ENCODE measurements at regions of chr1 and their contacts with region 1.

Region 1: DNA sequence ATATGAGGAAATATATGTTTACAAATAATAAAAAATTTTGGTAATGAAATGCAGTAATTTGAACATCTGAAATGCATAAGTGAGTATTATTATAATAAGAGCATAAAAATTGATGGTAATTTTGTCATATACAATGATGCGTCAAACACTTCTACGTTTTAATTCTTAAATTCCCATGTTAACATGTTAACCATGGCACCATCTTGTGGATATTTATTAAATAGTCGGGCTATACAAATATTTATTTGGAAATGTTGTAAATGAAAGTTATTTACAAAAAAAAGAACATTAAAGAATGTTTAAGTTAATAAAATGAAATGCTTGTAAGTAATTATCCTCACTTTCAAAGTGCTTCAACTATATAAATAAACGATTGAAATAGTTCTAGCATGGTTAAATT is 57.2 kb upstream of the C1orf185 start:
- DNase-seq: peak; percentile 19
- H3K4me3 ChIP-seq: no peak overlapping the region
- H3K27ac ChIP-seq: no peak overlapping the region
- H3K4me1 ChIP-seq: no peaks in the 10 kb centered on the region
- H3K27me3 ChIP-seq: peaks cover 2 to 3% of the 10 kb centered on the region in 2 experiments
- CTCF ChIP-seq: no peak
- POLR2A ChIP-seq: no peak

Region 2: DNA sequence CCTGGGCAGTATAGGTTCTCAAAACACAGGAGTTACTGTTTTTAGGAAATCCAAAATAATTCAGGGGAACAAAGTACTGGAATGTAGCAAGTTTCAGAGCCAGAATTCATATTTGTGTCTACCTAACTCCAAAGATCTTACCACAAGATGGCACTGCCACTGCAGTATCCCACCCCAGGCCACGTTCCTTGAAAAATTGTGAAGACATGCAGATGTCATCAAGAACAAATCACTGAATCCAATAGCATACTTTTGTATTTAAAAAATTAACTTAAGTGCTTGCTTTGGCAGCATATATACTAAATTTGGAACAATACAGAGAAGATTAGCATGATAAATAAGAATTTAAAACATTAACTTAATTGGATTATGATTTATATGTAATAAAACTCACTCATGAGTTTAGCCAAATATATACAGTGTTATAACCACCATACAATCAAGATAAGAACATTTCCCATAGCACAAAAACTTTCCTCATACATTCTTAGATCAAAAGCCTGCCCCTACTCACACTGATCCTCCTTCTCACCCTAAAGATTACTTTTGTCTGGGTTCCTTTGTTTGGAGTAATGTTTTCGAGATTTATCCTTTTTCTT is 294.7 kb before region 1 on chr1:
- CTCF ChIA-PET with region 1: no interaction called
- POLR2A ChIA-PET with region 1: no interaction called
- dilution Hi-C with region 1: no loop called
- intact Hi-C with region 1: loop called (anchors 5 kb)
- DNase-seq: peak; percentile 61
- H3K4me3 ChIP-seq: no peak overlapping the region
- H3K27ac ChIP-seq: no peak overlapping the region
- H3K4me1 ChIP-seq: no peaks in the 10 kb centered on the region
- H3K27me3 ChIP-seq: no peaks in the 10 kb centered on the region
- CTCF ChIP-seq: peak; percentile 32 to 50
- POLR2A ChIP-seq: no peak

Region 3: GRCh38 chr1:50873458-50874187 is 171.2 kb before region 1 on chr1:
- CTCF ChIA-PET with region 1: interaction called, 4 read pairs
- POLR2A ChIA-PET with region 1: no interaction called
- dilution Hi-C with region 1: no loop called
- intact Hi-C with region 1: loop called (anchors 1 kb)
- DNase-seq: peak; percentile 74
- H3K4me3 ChIP-seq: no peak overlapping the region
- H3K27ac ChIP-seq: no peak overlapping the region
- H3K4me1 ChIP-seq: no peaks in the 10 kb centered on the region
- H3K27me3 ChIP-seq: no peaks in the 10 kb centered on the region
- CTCF ChIP-seq: peak; percentile 60 to 63
- POLR2A ChIP-seq: no peak

Region 4: DNA sequence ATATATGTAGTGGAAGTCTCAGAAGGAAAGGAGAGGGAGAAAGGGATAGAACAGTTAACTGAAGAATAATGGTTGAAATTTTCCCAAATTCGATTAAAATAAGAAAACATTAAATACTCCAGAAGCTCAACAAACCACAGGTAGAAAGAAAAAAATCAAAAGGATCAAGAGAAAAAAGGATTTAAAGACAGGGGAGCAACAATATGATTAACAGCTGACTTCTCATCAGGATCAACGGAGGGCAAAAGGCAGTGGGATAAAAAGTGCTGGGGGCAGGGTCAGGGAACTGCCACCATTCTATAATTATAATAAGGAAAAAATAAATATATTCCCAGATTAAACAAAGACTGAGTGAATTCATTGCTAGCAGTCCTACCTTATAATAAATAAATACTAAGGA is 19.5 kb before region 1 on chr1:
- CTCF ChIA-PET with region 1: no interaction called
- POLR2A ChIA-PET with region 1: no interaction called
- dilution Hi-C with region 1: no loop called
- intact Hi-C with region 1: no loop called
- DNase-seq: no peak
- H3K4me3 ChIP-seq: no peak overlapping the region
- H3K27ac ChIP-seq: no peak overlapping the region
- H3K4me1 ChIP-seq: no peaks in the 10 kb centered on the region
- H3K27me3 ChIP-seq: no peaks in the 10 kb centered on the region
- CTCF ChIP-seq: no peak
- POLR2A ChIP-seq: no peak

Region 5: DNA sequence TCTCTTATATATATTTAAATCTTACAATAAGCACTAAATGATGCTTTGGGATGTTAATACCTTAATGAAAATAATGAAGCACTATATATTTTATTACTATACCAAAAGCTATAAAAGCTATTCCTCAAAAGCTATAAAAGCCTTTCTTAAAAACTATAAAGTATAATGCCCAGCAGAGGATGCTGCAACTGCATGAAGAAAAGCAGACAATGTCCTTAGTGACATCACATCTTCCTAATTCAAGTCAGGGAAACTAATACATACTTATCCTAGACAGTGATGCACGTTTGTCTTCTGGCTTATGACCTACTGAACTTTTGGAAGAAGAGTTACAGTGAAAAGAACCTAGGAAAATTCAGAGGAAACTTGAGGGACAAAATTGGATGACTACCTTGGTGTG is 43.7 kb after region 1 on chr1:
- CTCF ChIA-PET with region 1: no interaction called
- POLR2A ChIA-PET with region 1: no interaction called
- dilution Hi-C with region 1: no loop called
- intact Hi-C with region 1: no loop called
- DNase-seq: peak; percentile 7
- H3K4me3 ChIP-seq: no peak overlapping the region
- H3K27ac ChIP-seq: no peak overlapping the region
- H3K4me1 ChIP-seq: no peaks in the 10 kb centered on the region
- H3K27me3 ChIP-seq: peaks cover 14 to 15% of the 10 kb centered on the region in 2 experiments
- CTCF ChIP-seq: no peak
- POLR2A ChIP-seq: no peak